ENCODE measurements at regions of chr6 and their contacts with region 1.

Region 1: DNA sequence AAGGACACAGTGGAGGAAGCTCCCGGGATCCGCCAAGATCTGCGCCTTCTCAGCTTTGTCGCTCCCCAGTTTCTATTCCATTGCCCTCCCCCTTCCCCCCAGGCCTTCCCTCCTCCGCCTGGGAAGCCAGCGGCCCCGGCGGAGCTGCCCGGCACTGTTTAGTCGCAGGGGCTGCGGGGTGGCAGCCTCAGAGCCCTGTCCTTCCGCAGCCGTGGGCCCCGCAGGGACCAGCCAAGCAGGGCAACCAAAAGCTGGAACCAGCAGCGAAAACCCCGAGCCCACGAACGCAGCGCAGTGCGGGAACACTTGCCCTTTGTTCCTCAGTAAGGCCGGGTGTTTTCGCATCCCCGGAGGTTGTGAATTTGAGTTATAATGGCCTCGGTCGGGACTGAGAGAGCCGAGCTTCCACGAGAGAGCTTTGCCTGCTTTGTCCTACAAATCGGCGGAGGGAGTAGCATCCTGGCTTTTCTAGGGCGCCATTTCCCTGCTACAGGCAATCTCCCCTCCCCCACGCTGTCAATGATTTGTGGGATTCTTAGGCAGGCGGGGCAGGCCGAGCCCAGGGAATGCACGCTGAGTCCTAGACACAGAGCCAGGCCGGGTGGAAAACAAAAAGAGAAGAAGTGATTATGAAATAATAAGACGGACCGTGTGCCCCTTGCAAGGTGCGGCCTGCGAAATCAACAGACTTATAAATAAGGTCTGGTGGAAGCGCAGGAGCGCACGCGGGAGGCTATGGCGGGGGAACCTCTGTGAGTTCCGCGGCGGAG is 4.0 kb upstream of the TUBB2B start:
- DNase-seq: peak; percentile 27
- ATAC-seq: no peak
- H3K4me3 Mint-ChIP-seq: peak overlapping the region; percentile 55
- H3K27ac Mint-ChIP-seq: no peak overlapping the region
- H3K4me1 Mint-ChIP-seq: peaks cover 43% of the 10 kb centered on the region
- H3K27me3 Mint-ChIP-seq: peaks cover 66% of the 10 kb centered on the region

Region 2: DNA sequence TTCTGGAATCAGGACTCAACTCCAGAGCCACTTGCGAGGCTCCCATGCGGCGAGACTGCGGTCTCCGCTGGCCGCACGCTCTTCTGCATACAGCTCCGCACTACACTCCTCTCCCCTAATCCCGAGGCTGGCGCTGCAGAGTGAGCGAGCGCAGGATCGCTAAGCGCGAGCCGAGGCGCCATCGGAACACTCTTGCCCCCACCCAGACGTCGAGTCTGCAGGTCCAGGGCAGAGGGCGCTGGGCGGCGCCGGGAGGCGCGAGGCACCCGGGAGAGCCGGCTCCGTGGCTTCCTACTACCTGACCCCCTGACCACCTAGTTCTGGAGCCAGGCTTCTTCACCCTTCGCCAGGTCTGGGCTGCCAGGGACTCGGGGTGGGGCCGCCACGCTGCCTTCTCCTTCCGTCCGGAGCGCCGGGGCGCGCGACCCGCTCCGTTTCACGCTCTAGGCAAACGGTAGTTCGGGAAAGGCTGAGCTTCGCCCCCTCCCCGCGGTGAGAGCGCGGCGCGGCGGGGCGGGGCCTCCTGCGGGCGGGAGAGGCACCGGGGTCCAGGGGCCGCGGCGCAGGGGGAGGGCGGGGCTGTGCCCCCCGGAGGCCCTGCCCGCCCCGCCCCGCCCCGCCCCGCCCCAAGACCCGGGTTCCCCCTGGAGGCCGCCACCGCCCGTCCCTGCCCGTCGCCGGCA is 68.7 kb before region 1 on chr6:
- CTCF ChIA-PET with region 1: interaction called, 3 read pairs
- POLR2A ChIA-PET with region 1: no interaction called
- intact Hi-C with region 1: loop called in 1 of 2 experiments (anchors 1 kb)
- DNase-seq: peak; percentile 74
- ATAC-seq: peak; percentile 84
- H3K4me3 Mint-ChIP-seq: peak overlapping the region; percentile 66
- H3K27ac Mint-ChIP-seq: peak overlapping the region; percentile 47
- H3K4me1 Mint-ChIP-seq: peaks cover 30% of the 10 kb centered on the region
- H3K27me3 Mint-ChIP-seq: peaks cover 28% of the 10 kb centered on the region

Measured in activated CD4-positive, alpha-beta T cell treated with anti-CD3 and anti-CD28 coated beads for 36 hours (primary cell).